BJ (cell line): ENCODE measurements at regions of chr1 and their contacts with region 1.

Region 1: DNA sequence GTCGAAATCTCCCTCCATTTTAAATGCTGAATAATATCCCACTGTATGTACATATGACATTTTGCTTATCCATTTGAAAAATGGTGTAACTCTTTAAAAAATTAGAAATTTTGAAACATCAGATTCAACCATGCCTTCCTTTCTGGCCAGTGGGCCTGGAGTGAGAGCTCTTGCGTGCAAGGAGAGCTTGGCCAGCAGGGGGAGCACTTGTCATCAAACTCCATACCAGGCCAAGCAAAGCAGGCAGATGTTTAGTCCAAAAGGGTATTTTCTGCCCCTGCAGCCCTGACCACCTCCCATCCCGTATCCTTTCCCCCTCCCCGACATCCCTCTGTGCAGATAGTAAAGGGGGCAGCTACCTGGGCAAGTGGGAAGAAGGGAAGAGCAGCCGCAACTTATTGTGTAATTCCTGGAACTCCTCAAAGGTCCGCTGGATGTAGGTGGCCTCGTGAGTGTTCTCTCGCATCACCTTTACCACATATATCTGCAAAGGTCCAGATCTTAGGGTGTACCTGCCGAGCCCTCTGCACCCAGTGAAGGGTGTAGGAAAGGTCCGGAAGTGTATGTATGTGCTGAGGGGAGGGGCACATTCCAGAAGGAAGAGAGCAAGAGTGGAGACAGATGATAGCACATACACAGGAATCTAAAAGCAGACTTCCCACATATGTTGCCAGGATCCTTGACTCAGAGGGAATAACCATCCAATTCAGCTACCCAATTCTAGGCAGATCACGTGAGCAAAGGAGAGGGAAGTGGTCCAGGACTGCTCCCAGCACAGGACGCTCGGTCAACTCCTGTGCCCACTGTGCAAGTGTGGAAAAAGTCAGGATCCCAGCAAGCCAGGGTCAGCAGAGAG is 19.9 kb upstream of the PPP1R15B start:
- DNase-seq: no peak
- H3K4me3 ChIP-seq: no peak overlapping the region
- H3K27me3 ChIP-seq: no peaks in the 10 kb centered on the region
- CTCF ChIP-seq: peak; percentile 94

Region 2: GRCh38 chr1:204094856-204095644 is 336.5 kb before region 1 on chr1:
- CTCF ChIA-PET with region 1: no interaction called
- POLR2A ChIA-PET with region 1: no interaction called
- DNase-seq: no peak
- H3K4me3 ChIP-seq: no peak overlapping the region
- H3K27me3 ChIP-seq: no peaks in the 10 kb centered on the region
- CTCF ChIP-seq: no peak

Region 3: GRCh38 chr1:204254031-204254661 is 177.4 kb before region 1 on chr1:
- CTCF ChIA-PET with region 1: no interaction called
- POLR2A ChIA-PET with region 1: no interaction called
- DNase-seq: peak; percentile 76
- H3K4me3 ChIP-seq: no peak overlapping the region
- H3K27me3 ChIP-seq: no peaks in the 10 kb centered on the region
- CTCF ChIP-seq: no peak

Region 4: GRCh38 chr1:204411451-204412204 is 19.9 kb before region 1 on chr1 and contains the start of gene PPP1R15B:
- CTCF ChIA-PET with region 1: interaction called, 34 read pairs
- POLR2A ChIA-PET with region 1: no interaction called
- DNase-seq: peak; percentile 94
- H3K4me3 ChIP-seq: peak within 1 kb of the TSS; percentile 72
- H3K27me3 ChIP-seq: no peaks in the 10 kb centered on the region
- CTCF ChIP-seq: no peak
- polyA plus RNA-seq, gene PPP1R15B: 24.6 and 30.2 TPM in 2 replicates

Region 5: DNA sequence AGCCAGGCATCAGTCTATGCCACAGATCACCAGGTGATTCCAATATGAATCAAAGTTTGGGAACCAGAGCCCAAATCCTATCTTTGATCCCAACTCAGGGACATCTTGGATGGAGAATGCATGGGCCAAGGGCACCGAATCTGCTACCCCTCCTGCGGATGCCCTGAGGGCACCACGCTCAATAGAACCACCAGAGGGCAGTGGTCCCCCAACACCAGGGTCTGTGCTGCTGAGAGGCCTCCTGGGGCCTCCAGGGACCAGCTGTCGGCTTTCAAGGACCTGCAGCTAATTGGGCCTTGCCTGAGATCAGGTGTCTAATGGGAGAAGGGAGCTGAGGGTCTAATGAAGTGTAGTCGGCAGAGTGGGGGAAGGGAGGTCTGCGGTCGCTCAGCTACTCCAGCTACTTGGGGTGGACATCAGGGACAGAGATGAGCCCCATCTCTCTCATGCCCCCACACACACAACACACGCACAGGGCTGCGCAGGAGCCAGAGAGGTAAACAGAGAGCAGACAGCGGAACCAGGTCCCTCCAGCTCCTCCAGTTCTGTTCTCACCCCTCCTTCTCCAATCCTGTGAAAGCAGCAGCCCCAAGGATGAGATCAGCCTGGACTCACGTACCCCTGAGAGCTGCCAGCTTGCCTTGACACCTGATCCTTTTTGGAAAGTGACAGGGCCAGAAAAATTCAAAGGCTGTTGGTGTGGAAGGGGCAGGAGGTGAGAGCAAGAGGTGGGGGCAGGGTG is 15.0 kb after region 1 on chr1:
- CTCF ChIA-PET with region 1: interaction called, 33 read pairs
- POLR2A ChIA-PET with region 1: no interaction called
- DNase-seq: no peak
- H3K4me3 ChIP-seq: no peak overlapping the region
- H3K27me3 ChIP-seq: no peaks in the 10 kb centered on the region
- CTCF ChIP-seq: peak; percentile 78

Region 6: GRCh38 chr1:204487256-204487615 is 55.7 kb after region 1 on chr1:
- CTCF ChIA-PET with region 1: interaction called, 39 read pairs
- POLR2A ChIA-PET with region 1: no interaction called
- DNase-seq: no peak
- H3K4me3 ChIP-seq: no peak overlapping the region
- H3K27me3 ChIP-seq: peaks cover 1% of the 10 kb centered on the region
- CTCF ChIP-seq: no peak

Region 7: GRCh38 chr1:204506961-204507387 is 75.4 kb after region 1 on chr1:
- CTCF ChIA-PET with region 1: interaction called, 44 read pairs
- POLR2A ChIA-PET with region 1: no interaction called
- DNase-seq: peak; percentile 75
- H3K4me3 ChIP-seq: peak overlapping the region; percentile 37
- H3K27me3 ChIP-seq: no peaks in the 10 kb centered on the region
- CTCF ChIP-seq: no peak

Region 8: GRCh38 chr1:204659056-204659455 is 227.5 kb after region 1 on chr1:
- CTCF ChIA-PET with region 1: no interaction called
- POLR2A ChIA-PET with region 1: no interaction called
- DNase-seq: no peak
- H3K4me3 ChIP-seq: no peak overlapping the region
- H3K27me3 ChIP-seq: peaks cover 8% of the 10 kb centered on the region
- CTCF ChIP-seq: no peak